ENCODE measurements at regions of chr11 and their contacts with region 1.

Region 1: DNA sequence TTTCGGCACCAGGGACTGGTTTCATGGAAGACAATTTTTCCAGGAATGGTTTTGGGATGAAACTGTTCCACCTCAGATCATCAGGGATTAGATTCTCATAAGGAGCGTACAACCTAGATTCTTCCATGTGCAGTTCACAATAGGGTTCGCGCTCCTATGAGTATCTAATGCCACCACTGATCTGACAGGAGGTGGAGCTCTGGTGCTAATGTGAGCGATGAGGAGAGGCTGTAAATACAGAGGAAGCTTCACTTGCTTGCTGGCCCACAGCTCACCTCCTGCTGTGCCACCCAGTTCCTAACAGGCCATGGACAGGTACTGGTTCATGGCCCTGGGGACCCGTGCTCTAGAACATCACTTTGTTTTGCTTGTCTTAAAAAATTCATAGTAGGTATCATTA is 41.8 kb upstream of the AMPD3 start:
- DNase-seq: peak in 4 of 5 donors; percentile 44 to 56 (median 50)
- H3K4me3 ChIP-seq: no peak overlapping the region
- H3K4me3 Mint-ChIP-seq: peak overlapping the region in 1 of 8 donors; percentile 49
- H3K27ac ChIP-seq: no peak overlapping the region
- H3K27ac Mint-ChIP-seq: no peak overlapping the region
- H3K4me1 ChIP-seq: peaks cover 39% of the 10 kb centered on the region
- H3K4me1 Mint-ChIP-seq: peaks cover 36 to 53% (median 39%) of the 10 kb centered on the region in 4 donors
- H3K27me3 ChIP-seq: no peaks in the 10 kb centered on the region
- H3K27me3 Mint-ChIP-seq: no peaks in the 10 kb centered on the region

Region 2: DNA sequence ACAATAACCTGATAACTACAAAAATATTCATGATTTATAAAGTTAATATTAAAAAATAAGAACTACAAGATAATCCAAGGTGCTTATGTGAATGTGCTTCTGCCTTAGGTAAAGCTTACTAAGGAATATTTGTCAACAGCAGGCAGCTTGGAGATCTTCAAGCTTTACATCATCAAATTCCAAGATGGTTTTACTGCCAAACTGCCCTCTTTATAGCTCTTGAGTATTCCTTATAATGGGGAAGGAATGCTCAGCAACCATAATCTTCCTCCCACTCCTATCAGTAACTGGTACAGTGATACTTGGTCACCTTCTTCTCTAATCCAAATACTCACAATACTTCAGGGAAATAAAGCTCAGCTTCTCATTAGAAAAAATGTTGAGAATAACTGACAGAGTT is 149.3 kb before region 1 on chr11:
- CTCF ChIA-PET with region 1: no interaction called
- POLR2A ChIA-PET with region 1: no interaction called
- intact Hi-C with region 1: no loop called
- DNase-seq: no peak
- H3K4me3 ChIP-seq: no peak overlapping the region
- H3K4me3 Mint-ChIP-seq: no peak overlapping the region
- H3K27ac ChIP-seq: no peak overlapping the region
- H3K27ac Mint-ChIP-seq: no peak overlapping the region
- H3K4me1 ChIP-seq: no peaks in the 10 kb centered on the region
- H3K4me1 Mint-ChIP-seq: peaks cover 0 to 6% (median 0%) of the 10 kb centered on the region in 4 donors
- H3K27me3 ChIP-seq: no peaks in the 10 kb centered on the region
- H3K27me3 Mint-ChIP-seq: peaks cover 0 to 1% of the 10 kb centered on the region in 2 donors

Region 3: GRCh38 chr11:10382518-10382917 is 30.8 kb before region 1 on chr11:
- CTCF ChIA-PET with region 1: no interaction called
- POLR2A ChIA-PET with region 1: no interaction called
- intact Hi-C with region 1: no loop called
- DNase-seq: no peak
- H3K4me3 ChIP-seq: no peak overlapping the region
- H3K4me3 Mint-ChIP-seq: no peak overlapping the region
- H3K27ac ChIP-seq: no peak overlapping the region
- H3K27ac Mint-ChIP-seq: no peak overlapping the region
- H3K4me1 ChIP-seq: no peaks in the 10 kb centered on the region
- H3K4me1 Mint-ChIP-seq: no peaks in the 10 kb centered on the region
- H3K27me3 ChIP-seq: no peaks in the 10 kb centered on the region
- H3K27me3 Mint-ChIP-seq: peaks cover 20 to 31% of the 10 kb centered on the region in 2 donors

Region 4: GRCh38 chr11:10426475-10426874 is 13.2 kb after region 1 on chr11:
- CTCF ChIA-PET with region 1: interaction called, 17 read pairs
- POLR2A ChIA-PET with region 1: interaction called, 3 read pairs
- intact Hi-C with region 1: no loop called
- DNase-seq: no peak
- H3K4me3 ChIP-seq: no peak overlapping the region
- H3K4me3 Mint-ChIP-seq: no peak overlapping the region
- H3K27ac ChIP-seq: no peak overlapping the region
- H3K27ac Mint-ChIP-seq: no peak overlapping the region
- H3K4me1 ChIP-seq: no peaks in the 10 kb centered on the region
- H3K4me1 Mint-ChIP-seq: no peaks in the 10 kb centered on the region
- H3K27me3 ChIP-seq: peaks cover 6% of the 10 kb centered on the region
- H3K27me3 Mint-ChIP-seq: peaks cover 12 to 13% of the 10 kb centered on the region in 2 donors

Region 5: DNA sequence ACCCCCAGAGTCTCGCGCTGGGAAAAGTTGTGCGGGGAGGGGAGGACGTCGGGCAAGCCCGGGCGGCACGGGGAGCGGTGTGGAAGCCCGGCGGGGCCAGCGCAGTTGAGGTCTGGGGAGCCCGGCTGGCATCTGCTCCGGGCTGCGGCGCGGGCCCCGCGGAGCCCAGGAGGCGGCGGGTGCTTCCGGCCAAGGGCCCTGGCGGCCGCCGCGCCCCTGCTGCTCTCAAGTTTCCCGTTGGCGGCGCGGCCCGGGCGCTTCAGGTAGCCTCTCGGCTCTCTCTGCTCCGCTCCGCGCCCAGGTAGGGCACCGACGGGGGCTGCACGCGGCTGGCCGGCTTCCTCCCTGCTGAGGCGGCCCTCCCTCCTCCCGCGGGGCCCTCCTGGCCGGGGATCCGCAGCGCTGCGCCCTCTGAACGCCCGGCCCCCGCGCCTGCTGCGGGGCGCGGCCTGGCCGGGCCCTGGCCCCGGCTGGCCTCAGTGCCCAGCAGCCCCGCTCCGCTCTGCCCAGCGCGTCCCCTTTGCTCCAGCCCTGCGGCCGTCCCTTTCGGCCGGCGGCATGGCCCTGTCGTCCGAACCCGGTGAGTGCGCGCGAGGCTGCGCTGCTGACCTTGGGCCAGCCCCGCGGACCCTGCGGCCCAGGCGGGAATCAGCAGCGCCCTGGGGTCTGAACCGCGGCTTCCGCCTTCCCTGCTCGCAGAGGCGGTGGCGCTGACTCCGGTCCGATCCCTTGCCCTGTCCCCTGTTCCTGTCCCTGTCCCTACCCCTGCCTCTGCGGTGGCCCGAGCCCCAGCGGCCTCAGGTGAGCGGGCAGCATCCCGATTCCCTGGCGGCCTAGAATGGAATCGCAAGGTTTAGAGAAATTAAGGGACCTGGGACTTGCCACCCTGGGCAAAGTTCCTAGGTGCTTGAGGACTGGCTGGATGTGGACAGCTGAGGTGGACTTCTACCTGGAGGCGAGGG is 37.5 kb after region 1 on chr11:
- CTCF ChIA-PET with region 1: interaction called, 26 read pairs
- POLR2A ChIA-PET with region 1: interaction called, 14 read pairs
- intact Hi-C with region 1: no loop called
- DNase-seq: peak; percentile 56 to 67 (median 58)
- H3K4me3 ChIP-seq: peak overlapping the region; percentile 39 to 66
- H3K4me3 Mint-ChIP-seq: peak overlapping the region; percentile 91 to 98 (median 94)
- H3K27ac ChIP-seq: peak overlapping the region; percentile 76
- H3K27ac Mint-ChIP-seq: peak overlapping the region; percentile 93 to 97 (median 96)
- H3K4me1 ChIP-seq: peaks cover 45% of the 10 kb centered on the region
- H3K4me1 Mint-ChIP-seq: peaks cover 41 to 62% (median 50%) of the 10 kb centered on the region in 4 donors
- H3K27me3 ChIP-seq: no peaks in the 10 kb centered on the region
- H3K27me3 Mint-ChIP-seq: peaks cover 0 to 2% of the 10 kb centered on the region in 2 donors

Region 6: DNA sequence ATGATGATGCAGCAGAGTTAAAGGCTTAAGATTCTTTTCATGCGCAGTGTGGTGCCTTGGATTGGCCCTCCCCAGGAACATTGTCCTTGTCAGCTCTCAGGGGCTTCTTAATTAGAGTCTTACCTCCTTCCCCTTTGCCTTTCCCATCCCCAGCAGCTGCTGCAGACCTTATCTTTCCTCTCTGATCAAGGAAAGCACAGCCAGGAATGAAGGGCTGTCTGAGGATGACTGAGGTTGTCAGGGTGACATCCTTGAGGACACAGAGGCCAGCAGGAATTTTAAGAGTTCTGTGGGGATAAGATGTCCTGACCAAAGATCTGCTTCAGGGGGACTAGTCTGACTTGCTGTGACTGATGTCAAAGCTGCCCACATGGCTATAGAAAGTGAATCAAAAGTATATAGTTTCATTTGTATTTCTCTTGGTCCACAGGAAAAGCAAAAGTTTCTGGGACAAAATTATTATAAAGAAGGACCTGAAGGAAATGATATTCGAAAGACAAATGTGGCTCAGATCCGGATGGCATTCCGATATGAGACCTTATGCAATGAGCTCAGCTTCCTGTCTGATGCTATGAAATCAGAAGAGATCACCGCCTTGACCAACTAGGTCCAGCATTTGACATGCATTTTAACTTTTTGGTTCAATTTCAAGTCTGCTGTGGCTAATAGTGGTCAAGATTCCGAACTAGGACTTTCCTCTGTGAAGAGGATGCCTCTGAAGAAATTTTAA is 92.2 kb after region 1 on chr11:
- CTCF ChIA-PET with region 1: interaction called, 20 read pairs
- POLR2A ChIA-PET with region 1: no interaction called
- intact Hi-C with region 1: loop called (anchors 10 kb)
- DNase-seq: no peak
- H3K4me3 ChIP-seq: no peak overlapping the region
- H3K4me3 Mint-ChIP-seq: no peak overlapping the region
- H3K27ac ChIP-seq: no peak overlapping the region
- H3K27ac Mint-ChIP-seq: peak overlapping the region in 4 of 7 donors; percentile 12 to 78 (median 44)
- H3K4me1 ChIP-seq: no peaks in the 10 kb centered on the region
- H3K4me1 Mint-ChIP-seq: peaks cover 0 to 2% (median under 1%) of the 10 kb centered on the region in 4 donors
- H3K27me3 ChIP-seq: no peaks in the 10 kb centered on the region
- H3K27me3 Mint-ChIP-seq: no peaks in the 10 kb centered on the region

Region 7: GRCh38 chr11:10540923-10541560 is 127.8 kb after region 1 on chr11 and contains the start of gene RNF141:
- CTCF ChIA-PET with region 1: interaction called, 36 read pairs
- POLR2A ChIA-PET with region 1: interaction called, 6 read pairs
- intact Hi-C with region 1: loop called (anchors 1 kb)
- DNase-seq: peak; percentile 89 to 94 (median 93)
- H3K4me3 ChIP-seq: peak within 1 kb of the TSS; percentile 50 to 77
- H3K4me3 Mint-ChIP-seq: peak within 1 kb of the TSS; percentile 87 to 95 (median 90)
- H3K27ac ChIP-seq: peak within 1 kb of the TSS; percentile 64
- H3K27ac Mint-ChIP-seq: peak within 1 kb of the TSS; percentile 87 to 95 (median 92)
- H3K4me1 ChIP-seq: peaks cover 9% of the 10 kb centered on the region
- H3K4me1 Mint-ChIP-seq: peaks cover 11 to 24% (median 18%) of the 10 kb centered on the region in 4 donors
- H3K27me3 ChIP-seq: no peaks in the 10 kb centered on the region
- H3K27me3 Mint-ChIP-seq: no peaks in the 10 kb centered on the region
- total RNA-seq, gene RNF141: 15.6 to 16.3 TPM

Region 8: GRCh38 chr11:10735481-10736475 is 322.5 kb after region 1 on chr11:
- CTCF ChIA-PET with region 1: interaction called, 45 read pairs
- POLR2A ChIA-PET with region 1: no interaction called
- intact Hi-C with region 1: loop called (anchors 1 kb)
- DNase-seq: peak; percentile 77 to 83 (median 80)
- H3K4me3 ChIP-seq: no peak overlapping the region
- H3K4me3 Mint-ChIP-seq: peak overlapping the region; percentile 36 to 81 (median 64)
- H3K27ac ChIP-seq: no peak overlapping the region
- H3K27ac Mint-ChIP-seq: peak overlapping the region in 5 of 7 donors; percentile 28 to 70 (median 45)
- H3K4me1 ChIP-seq: peaks cover 10% of the 10 kb centered on the region
- H3K4me1 Mint-ChIP-seq: peaks cover 9 to 26% (median 17%) of the 10 kb centered on the region in 4 donors
- H3K27me3 ChIP-seq: no peaks in the 10 kb centered on the region
- H3K27me3 Mint-ChIP-seq: peaks cover 4 to 9% of the 10 kb centered on the region in 2 donors